IMR-90 (cell line): ENCODE measurements at regions of chr3 and their contacts with region 1.

Region 1: DNA sequence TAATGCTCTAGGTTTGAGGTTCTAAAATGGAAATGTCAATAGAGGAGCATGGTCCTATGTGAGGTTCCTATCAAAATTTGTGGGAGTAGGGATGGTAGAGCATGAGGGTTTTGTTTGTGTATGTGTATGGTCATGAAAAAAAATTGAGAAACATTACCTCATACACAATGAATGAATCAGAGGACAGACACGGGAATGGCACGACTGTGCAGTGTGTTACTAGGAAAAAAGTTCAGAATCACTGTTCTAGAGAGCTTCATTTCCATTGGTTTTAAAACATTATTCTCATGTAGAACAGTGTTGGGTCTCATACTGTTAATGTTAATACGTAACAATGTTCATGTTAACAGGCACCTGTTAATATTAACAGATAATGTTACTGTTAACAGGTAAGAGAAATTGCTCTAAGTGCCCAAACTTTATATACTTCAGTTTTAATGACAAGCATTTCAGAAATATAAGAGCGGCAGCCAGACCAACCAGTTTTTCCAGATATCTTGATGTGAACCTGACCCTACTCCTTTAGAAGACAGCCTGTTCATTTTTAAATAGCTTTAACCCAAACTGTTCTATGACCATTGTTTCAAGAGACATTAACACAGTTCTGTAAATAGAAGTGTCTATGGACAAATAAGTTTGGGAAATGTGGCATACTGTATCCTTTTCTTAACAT is 48.1 kb downstream of the SLC15A2 start:
- DNase-seq: peak; percentile 7
- ATAC-seq: no peak; the same call in 1 of the 2 replicates
- H3K4me3 ChIP-seq: no peak overlapping the region
- H3K27ac ChIP-seq: no peak overlapping the region
- H3K4me1 ChIP-seq: no peaks in the 10 kb centered on the region
- H3K27me3 ChIP-seq: no peaks in the 10 kb centered on the region
- CTCF ChIP-seq: no peak
- POLR2A ChIP-seq: no peak
- RAD21 ChIP-seq: no peak

Region 2: GRCh38 chr3:121619691-121620090 is 322.6 kb before region 1 on chr3:
- CTCF ChIA-PET with region 1: interaction called, 10 read pairs
- POLR2A ChIA-PET with region 1: no interaction called
- dilution Hi-C with region 1: no loop called
- in situ Hi-C with region 1: no loop called
- intact Hi-C with region 1: no loop called
- DNase-seq: no peak
- ATAC-seq: no peak
- H3K4me3 ChIP-seq: no peak overlapping the region
- H3K27ac ChIP-seq: no peak overlapping the region
- H3K4me1 ChIP-seq: no peaks in the 10 kb centered on the region
- H3K27me3 ChIP-seq: peaks cover 5% of the 10 kb centered on the region; the same call in 1 of the 2 replicates
- CTCF ChIP-seq: no peak
- POLR2A ChIP-seq: no peak
- RAD21 ChIP-seq: no peak

Region 3: GRCh38 chr3:121989943-121990342 is 47.7 kb after region 1 on chr3:
- CTCF ChIA-PET with region 1: no interaction called
- POLR2A ChIA-PET with region 1: no interaction called
- dilution Hi-C with region 1: no loop called
- in situ Hi-C with region 1: no loop called
- intact Hi-C with region 1: no loop called
- DNase-seq: no peak
- ATAC-seq: peak; percentile 56; the same call in 1 of the 2 replicates
- H3K4me3 ChIP-seq: no peak overlapping the region
- H3K27ac ChIP-seq: no peak overlapping the region
- H3K4me1 ChIP-seq: no peaks in the 10 kb centered on the region
- H3K27me3 ChIP-seq: no peaks in the 10 kb centered on the region; the same call in none of the 2 replicates
- CTCF ChIP-seq: no peak
- POLR2A ChIP-seq: no peak
- RAD21 ChIP-seq: no peak

Region 4: DNA sequence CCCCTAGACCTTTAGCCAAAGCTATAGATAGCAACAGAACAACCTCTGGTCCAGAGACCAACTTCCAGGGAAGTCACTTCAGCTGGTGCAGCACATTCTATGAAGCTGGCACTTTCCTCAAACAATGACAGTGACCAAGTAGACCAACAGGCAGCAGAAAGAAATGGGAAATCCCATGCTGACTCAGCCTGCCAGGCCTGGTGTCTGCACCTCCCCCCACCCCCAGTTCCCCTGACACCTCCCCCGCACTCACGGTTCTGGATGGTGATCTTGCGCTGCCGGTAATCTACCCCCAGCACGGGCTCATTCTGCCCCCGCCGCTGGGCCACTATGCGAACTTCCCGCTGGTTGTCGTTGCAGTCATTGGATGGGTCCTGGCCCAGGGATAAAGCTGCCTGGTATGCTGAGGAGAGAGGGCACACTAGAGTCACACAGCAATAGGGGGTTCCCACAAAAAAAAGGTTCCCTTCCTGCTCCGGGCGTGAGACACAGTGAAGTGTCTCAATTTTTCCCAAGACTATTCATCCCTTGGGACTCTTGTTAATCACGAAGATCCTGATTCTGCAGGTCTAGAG is 62.8 kb after region 1 on chr3:
- CTCF ChIA-PET with region 1: no interaction called
- POLR2A ChIA-PET with region 1: no interaction called
- dilution Hi-C with region 1: no loop called
- in situ Hi-C with region 1: no loop called
- intact Hi-C with region 1: no loop called
- DNase-seq: no peak
- ATAC-seq: no peak
- H3K4me3 ChIP-seq: no peak overlapping the region
- H3K27ac ChIP-seq: no peak overlapping the region
- H3K4me1 ChIP-seq: no peaks in the 10 kb centered on the region
- H3K27me3 ChIP-seq: no peaks in the 10 kb centered on the region; the same call in none of the 2 replicates
- CTCF ChIP-seq: no peak
- POLR2A ChIP-seq: no peak
- RAD21 ChIP-seq: no peak